Heart right ventricle (tissue), 16 donors: ENCODE measurements at regions of chr9 and their contacts with region 1.

Region 1: DNA sequence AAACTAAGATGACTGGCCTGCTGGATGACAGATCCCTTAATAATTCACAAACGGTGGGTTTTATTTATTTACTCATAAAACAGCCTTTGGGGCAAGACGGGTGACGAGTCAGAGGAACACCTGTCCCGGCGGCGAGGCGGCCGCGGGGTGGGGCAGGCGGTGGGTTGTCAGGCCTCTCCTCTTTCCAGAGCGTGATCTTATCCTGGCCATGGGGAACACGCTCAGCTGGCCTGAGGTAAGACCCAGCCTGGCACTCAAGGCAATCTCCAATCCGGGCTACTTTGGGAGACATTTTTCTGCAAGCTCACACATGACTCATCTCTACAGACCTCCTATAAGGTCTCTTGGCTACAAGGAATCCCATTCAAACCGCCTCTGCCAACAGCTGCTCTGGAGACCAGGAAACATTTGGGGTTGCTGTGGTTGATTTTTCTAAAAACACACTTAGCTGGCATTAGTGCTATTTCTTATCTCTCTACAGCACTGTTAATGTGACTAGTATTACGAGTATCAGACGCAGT is 6.3 kb downstream of the RAPGEF1 start:
- DNase-seq: peak in 1 of 2 donors; percentile 32
- ATAC-seq: peak in 7 of 8 donors; percentile 15 to 65 (median 28)
- H3K4me3 ChIP-seq: peak overlapping the region in 1 of 10 donors; percentile 21
- H3K27ac ChIP-seq: peak overlapping the region in 8 of 10 donors; percentile 25 to 95 (median 68)
- H3K4me1 ChIP-seq: peaks cover 17 to 100% (median 95%) of the 10 kb centered on the region in 9 donors
- H3K27me3 ChIP-seq: no peaks in the 10 kb centered on the region
- CTCF ChIP-seq: no peak

Region 2: DNA sequence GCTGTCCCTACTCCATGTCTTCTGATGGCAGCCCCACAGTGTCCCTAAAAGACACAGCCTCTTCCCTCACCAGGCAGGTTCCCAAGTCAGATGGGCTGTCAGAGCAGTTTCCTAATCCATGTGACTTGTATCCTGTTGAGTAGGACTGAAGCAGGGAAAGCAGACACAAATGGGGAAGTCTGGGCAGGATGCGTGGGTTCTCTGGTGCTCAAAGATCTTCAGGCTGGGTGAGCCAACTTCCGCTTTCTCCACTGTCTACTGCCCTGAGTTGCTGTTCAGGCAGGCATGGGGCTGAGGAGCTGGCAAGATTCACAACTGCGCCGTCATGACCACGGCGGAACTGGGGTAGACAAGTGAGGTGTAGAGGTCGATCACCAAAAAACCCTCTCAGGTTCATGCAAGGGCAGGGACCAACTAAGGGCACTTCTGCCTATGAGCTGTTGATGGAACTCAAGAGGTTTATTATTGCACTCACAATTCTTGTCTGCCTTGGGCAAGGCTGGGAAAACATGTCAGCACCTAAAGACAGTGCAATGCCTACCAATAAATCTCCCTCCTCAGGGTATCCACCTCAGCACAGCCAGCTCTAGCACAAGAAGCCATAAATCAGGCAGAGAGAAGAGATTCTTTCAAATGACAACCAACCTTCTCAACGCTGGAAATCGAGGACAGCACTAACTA is 77.1 kb before region 1 on chr9:
- intact Hi-C with region 1: loop called in 1 of 10 experiments (anchors 5 kb)
- DNase-seq: peak; percentile 59 to 66
- ATAC-seq: peak; percentile 63 to 86 (median 78)
- H3K4me3 ChIP-seq: no peak overlapping the region
- H3K27ac ChIP-seq: peak overlapping the region in 8 of 10 donors; percentile 12 to 91 (median 55)
- H3K4me1 ChIP-seq: peaks cover 15 to 99% (median 86%) of the 10 kb centered on the region in 9 donors
- H3K27me3 ChIP-seq: no peaks in the 10 kb centered on the region
- CTCF ChIP-seq: no peak

Region 3: DNA sequence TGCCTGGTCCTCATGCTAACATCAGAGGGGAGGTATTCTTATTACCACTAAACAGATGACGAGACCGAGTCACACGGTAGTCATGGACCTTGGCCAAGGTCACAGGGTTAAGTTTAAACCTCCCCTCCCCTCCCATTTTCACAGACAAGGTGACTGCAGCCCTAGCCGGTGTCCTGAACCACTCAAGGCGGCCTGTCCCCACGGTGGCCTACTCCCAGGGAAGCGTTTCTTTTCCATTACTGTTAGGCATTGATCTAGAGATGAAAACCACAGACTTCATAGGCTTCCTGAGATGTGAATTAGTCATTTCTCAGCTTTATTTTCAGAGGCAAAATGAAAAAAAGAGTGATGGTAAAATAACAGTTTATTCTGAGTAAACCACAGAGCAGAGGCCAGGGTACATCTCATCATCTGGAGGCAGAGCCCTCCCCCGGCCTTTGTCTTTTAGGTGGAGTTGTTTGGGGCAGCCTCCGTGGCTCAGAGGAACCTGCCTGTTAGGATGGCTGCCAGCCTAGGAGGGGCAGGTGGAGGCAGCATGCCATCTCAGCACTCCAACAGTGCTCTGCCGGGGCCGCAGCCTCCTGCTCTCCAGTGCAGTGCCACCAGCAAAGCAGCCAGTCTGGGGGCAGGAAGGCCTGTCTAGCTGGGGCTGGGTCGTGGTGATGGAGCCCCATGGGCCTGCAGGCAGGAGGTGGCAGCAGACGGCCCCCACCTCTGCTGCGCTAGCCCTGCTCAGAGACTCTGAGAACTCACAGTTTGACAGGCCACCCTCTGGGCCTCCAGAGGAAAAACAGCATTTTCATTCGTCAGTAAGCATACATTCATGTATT is 64.9 kb before region 1 on chr9:
- intact Hi-C with region 1: loop called in 5 of 10 experiments (anchors 5 to 10 kb)
- DNase-seq: no peak
- ATAC-seq: peak in 6 of 8 donors; percentile 23 to 35 (median 28)
- H3K4me3 ChIP-seq: peak overlapping the region in 1 of 10 donors; percentile 9
- H3K27ac ChIP-seq: peak overlapping the region; percentile 64 to 91 (median 83)
- H3K4me1 ChIP-seq: peaks cover 45 to 88% (median 80%) of the 10 kb centered on the region in 9 donors
- H3K27me3 ChIP-seq: no peaks in the 10 kb centered on the region
- CTCF ChIP-seq: no peak